ENCODE measurements at regions of chr2 and their contacts with region 1.

Region 1: DNA sequence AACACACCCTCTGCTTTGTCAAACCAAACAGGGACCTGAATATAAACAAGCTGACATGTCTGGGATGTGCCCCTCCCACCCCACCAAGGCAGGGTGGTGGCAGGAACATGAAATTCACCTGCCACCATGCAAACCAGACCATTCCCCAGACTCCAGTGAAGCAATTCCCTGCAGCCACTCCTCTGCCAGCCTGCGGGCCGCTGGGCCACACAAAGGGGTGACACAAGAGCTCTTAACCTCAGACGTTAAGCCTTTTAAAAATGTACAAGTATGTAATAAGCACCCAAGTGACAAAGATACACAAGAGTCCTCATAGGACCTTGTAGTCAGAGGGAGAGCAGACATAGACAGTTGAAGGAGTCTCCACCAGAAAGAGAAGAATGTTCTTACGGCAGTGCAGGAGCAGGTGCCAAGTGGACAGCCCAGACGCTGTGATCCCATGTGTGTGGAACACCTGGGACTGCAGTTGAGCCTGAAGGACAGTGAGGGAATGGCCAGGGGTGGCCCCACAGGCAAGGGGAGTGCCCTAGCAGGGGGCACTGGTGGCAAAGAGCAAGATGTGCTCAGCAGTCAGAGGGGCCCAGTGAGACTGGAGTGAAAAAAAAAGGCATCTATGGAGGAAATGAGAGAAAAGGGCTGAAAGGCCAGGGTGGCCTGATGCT is 36.9 kb downstream of the CRACDL start:
- DNase-seq: no peak
- H3K4me3 ChIP-seq: no peak overlapping the region
- H3K27ac ChIP-seq: no peak overlapping the region
- H3K4me1 ChIP-seq: no peaks in the 10 kb centered on the region
- H3K27me3 ChIP-seq: no peaks in the 10 kb centered on the region
- CTCF ChIP-seq: no peak

Region 2: DNA sequence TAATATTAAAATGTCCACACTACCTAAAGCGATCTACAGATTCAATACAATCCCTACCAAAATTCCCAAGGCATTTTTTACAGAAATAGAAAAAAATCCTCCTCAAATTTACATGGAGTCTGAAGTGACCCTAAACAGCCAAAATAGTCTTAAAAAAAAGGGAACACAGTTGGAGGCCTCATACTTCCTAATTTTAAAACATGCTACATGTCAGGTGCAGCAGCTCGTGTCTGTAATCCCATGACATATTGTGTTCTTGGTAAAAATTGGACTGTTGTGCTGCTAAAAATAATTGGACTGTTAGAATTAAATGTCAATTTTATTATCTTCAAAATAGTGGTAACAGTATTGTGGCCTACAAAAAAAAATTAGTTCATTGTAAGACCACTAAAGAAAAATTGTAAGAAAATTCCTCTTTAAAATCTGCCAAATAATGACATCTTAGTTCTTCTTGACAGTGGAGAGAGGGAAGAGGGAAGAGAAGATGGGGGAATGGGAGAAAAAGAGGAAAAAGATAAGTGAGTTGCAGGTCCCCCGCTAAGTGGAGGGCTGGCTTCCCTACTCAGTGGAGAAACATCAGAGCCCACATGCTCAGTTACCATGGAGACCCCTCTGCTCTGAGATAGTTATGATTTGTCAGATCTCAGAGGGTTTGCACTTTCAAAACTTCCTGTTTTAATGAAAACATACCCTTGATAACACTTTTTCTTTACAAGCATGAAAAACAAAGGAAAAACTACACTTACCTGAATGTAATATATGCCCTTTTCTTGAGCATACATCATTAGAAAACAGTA is 244.3 kb before region 1 on chr2:
- intact Hi-C with region 1: no loop called
- DNase-seq: peak in 1 of 2 donors; percentile 32
- H3K4me3 ChIP-seq: no peak overlapping the region
- H3K27ac ChIP-seq: no peak overlapping the region
- H3K4me1 ChIP-seq: no peaks in the 10 kb centered on the region
- H3K27me3 ChIP-seq: no peaks in the 10 kb centered on the region
- CTCF ChIP-seq: no peak

Region 3: GRCh38 chr2:98936353-98937351 is 37.5 kb after region 1 on chr2:
- intact Hi-C with region 1: loop called (anchors 1 kb)
- DNase-seq: no peak
- H3K4me3 ChIP-seq: peak overlapping the region; percentile 40 to 52
- H3K27ac ChIP-seq: no peak overlapping the region
- H3K4me1 ChIP-seq: peaks cover 0 to 20% (median 16%) of the 10 kb centered on the region in 4 donors
- H3K27me3 ChIP-seq: peaks cover 0 to 38% of the 10 kb centered on the region in 2 donors
- CTCF ChIP-seq: no peak

Region 4: DNA sequence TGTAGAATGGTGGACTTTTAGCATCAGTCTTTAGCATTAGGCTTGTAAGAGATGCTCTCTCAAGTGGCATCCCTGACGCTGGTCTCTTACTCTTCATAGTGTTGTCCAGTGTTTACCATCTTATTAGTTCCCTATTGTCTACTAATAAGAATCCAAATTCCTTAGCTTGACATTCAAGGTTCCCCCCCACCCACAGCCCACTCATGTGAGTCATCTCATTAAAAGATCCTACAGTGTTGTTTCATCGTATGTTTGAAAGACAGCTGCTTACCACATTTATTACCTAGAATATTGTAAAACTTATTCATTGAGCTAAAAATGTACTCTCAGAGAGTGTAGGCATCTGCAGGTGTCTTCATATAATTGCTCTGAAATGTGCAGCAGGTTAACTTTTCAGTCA is 466.5 kb after region 1 on chr2:
- intact Hi-C with region 1: no loop called
- DNase-seq: no peak
- H3K4me3 ChIP-seq: no peak overlapping the region
- H3K27ac ChIP-seq: no peak overlapping the region
- H3K4me1 ChIP-seq: no peaks in the 10 kb centered on the region
- H3K27me3 ChIP-seq: no peaks in the 10 kb centered on the region
- CTCF ChIP-seq: no peak